BJ (cell line): ENCODE measurements at regions of chr11 and their contacts with region 1.

Region 1: GRCh38 chr11:63635762-63636465 is 21.7 kb upstream of the PLAAT3 start:
- DNase-seq: no peak
- H3K4me3 ChIP-seq: no peak overlapping the region
- H3K27me3 ChIP-seq: no peaks in the 10 kb centered on the region
- CTCF ChIP-seq: peak; percentile 77

Region 2: DNA sequence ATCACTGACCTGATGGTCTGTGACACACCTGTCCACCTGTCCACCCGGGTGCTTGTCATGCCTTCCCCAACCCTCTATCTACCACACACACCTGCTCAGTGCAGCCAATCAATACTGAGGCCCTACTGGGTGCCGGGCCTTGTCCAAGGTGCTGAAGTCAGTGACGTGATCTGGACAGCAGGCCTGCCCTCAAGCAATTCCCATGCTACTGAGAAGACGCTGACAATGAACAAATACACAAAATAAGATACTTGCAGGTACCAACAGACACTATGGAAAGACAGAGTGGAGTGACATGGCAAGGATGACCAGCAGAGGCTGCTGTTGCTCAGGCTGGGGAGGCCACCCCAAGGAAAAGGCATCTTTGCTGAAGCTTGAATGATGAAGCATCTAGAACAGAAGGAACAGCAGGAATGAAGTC is 42.9 kb before region 1 on chr11:
- CTCF ChIA-PET with region 1: interaction called, 10 read pairs
- POLR2A ChIA-PET with region 1: no interaction called
- DNase-seq: no peak
- H3K4me3 ChIP-seq: no peak overlapping the region
- H3K27me3 ChIP-seq: no peaks in the 10 kb centered on the region
- CTCF ChIP-seq: peak; percentile 71

Region 3: GRCh38 chr11:63738720-63739360 is 102.9 kb after region 1 on chr11:
- CTCF ChIA-PET with region 1: interaction called, 40 read pairs
- POLR2A ChIA-PET with region 1: no interaction called
- DNase-seq: peak; percentile 26
- H3K4me3 ChIP-seq: no peak overlapping the region
- H3K27me3 ChIP-seq: no peaks in the 10 kb centered on the region
- CTCF ChIP-seq: peak; percentile 91